WTC11 (cell line): ENCODE measurements at regions of chr6 and their contacts with region 1.

Region 1: DNA sequence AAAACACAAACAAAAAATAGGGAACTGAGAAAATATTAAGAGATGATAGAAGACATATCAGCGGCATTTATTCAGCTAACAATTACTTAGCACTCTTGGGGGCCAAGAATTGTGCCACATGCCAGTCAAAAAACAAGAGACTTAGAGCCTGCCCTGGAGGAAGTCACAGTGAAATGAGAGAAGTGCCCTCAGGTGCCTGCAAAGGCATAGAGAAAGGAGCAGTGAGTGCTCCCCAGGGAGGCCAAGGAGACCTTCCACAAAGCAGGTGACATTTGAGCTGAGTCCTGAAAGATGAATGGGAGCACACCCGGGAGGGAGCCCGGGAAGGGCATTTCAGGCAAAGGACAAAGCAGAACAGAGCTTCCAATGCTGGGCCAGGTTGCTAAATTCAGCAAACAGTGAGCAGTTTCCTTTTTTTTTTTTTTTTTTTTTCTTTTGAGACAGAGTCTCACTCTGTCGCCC is 184.7 kb upstream of the JARID2 start:
- DNase-seq: peak; percentile 26
- ATAC-seq: peak; percentile 58
- H3K4me3 Mint-ChIP-seq: no peak overlapping the region
- H3K27ac Mint-ChIP-seq: no peak overlapping the region
- H3K4me1 Mint-ChIP-seq: peaks cover 30% of the 10 kb centered on the region
- H3K27me3 Mint-ChIP-seq: no peaks in the 10 kb centered on the region
- CTCF ChIP-seq: no peak

Region 2: GRCh38 chr6:14775528-14775927 is 285.7 kb before region 1 on chr6:
- CTCF ChIA-PET with region 1: no interaction called
- POLR2A ChIA-PET with region 1: interaction called, 10 read pairs
- DNase-seq: no peak
- ATAC-seq: no peak
- H3K4me3 Mint-ChIP-seq: no peak overlapping the region
- H3K27ac Mint-ChIP-seq: no peak overlapping the region; the same call in 1 of the 2 replicates
- H3K4me1 Mint-ChIP-seq: peaks cover 55% of the 10 kb centered on the region
- H3K27me3 Mint-ChIP-seq: no peaks in the 10 kb centered on the region; the same call in 1 of the 2 replicates
- CTCF ChIP-seq: no peak